WTC11 (cell line): ENCODE measurements at regions of chr20 and their contacts with region 1.

Region 1: GRCh38 chr20:4026093-4026601 is 10.8 kb upstream of the RNF24 start:
- DNase-seq: no peak
- ATAC-seq: peak; percentile 84
- H3K4me3 Mint-ChIP-seq: no peak overlapping the region
- H3K27ac Mint-ChIP-seq: no peak overlapping the region
- H3K4me1 Mint-ChIP-seq: peaks cover 43% of the 10 kb centered on the region
- H3K27me3 Mint-ChIP-seq: peaks cover 45% of the 10 kb centered on the region
- CTCF ChIP-seq: no peak

Region 2: GRCh38 chr20:3616250-3616649 is 409.9 kb before region 1 on chr20:
- CTCF ChIA-PET with region 1: no interaction called
- POLR2A ChIA-PET with region 1: no interaction called
- DNase-seq: peak; percentile 42
- ATAC-seq: peak; percentile 70
- H3K4me3 Mint-ChIP-seq: no peak overlapping the region
- H3K27ac Mint-ChIP-seq: peak overlapping the region; percentile 73; the same call in 1 of the 2 replicates
- H3K4me1 Mint-ChIP-seq: peaks cover 10% of the 10 kb centered on the region
- H3K27me3 Mint-ChIP-seq: no peaks in the 10 kb centered on the region
- CTCF ChIP-seq: no peak

Region 3: DNA sequence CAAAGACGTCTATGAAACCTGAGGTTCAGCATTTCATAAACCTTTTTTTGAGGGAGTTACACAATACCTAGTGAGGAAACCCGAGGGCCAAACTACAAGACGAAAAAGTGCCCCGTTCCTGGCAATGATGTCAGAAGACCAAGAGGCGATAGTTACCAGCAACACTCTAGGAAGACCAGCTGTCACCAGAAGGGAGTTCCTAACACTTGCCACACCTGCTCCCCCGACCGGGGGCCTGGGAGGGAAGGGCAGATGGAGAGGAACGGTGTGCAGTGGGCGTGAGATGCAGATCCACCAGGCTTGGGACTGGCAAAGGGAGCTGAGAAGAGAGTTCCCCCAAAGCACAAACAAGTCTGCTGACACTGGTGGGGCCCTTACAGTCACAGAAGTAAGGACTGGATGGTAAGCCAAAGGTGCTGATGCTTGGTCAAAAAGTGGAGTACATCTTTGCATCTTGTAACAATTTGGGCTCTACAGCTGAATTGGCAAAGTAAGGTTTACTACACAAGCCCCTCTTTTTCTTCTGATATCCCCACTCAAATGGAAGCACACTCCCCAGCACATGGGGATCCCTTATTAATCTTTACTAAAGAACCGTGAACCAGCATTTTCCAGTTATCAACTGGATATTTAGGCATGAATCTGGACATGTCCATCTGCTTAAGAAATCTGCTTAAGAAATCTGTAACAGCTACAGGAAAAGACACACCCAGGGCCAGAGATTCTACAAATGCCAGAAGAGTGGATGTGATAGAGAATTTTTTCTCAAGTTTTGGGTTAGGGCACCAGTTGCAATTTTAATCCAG is 98.5 kb before region 1 on chr20:
- CTCF ChIA-PET with region 1: interaction called, 10 read pairs
- POLR2A ChIA-PET with region 1: no interaction called
- DNase-seq: no peak
- ATAC-seq: no peak; the same call in 1 of the 2 replicates
- H3K4me3 Mint-ChIP-seq: no peak overlapping the region
- H3K27ac Mint-ChIP-seq: peak overlapping the region; percentile 74
- H3K4me1 Mint-ChIP-seq: peaks cover 29% of the 10 kb centered on the region
- H3K27me3 Mint-ChIP-seq: no peaks in the 10 kb centered on the region
- CTCF ChIP-seq: no peak

Region 4: GRCh38 chr20:4119854-4120209 is 93.7 kb after region 1 on chr20:
- CTCF ChIA-PET with region 1: no interaction called
- POLR2A ChIA-PET with region 1: no interaction called
- DNase-seq: no peak
- ATAC-seq: no peak
- H3K4me3 Mint-ChIP-seq: no peak overlapping the region
- H3K27ac Mint-ChIP-seq: no peak overlapping the region
- H3K4me1 Mint-ChIP-seq: peaks cover 8% of the 10 kb centered on the region; the same call in 1 of the 2 replicates
- H3K27me3 Mint-ChIP-seq: peaks cover 2% of the 10 kb centered on the region; the same call in 1 of the 2 replicates
- CTCF ChIP-seq: no peak